Common myeloid progenitor, CD34-positive (primary cell): ENCODE measurements at regions of chr2 and their contacts with region 1.

Region 1: GRCh38 chr2:64675860-64676259 is 22.1 kb upstream of the SERTAD2 start:
- DNase-seq: peak in 2 of 3 donors; percentile 45 to 70
- H3K4me3 ChIP-seq: no peak overlapping the region
- H3K27ac ChIP-seq: no peak overlapping the region
- H3K4me1 ChIP-seq: peaks cover 4 to 33% (median 18%) of the 10 kb centered on the region in 4 experiments
- H3K27me3 ChIP-seq: no peaks in the 10 kb centered on the region

Region 2: DNA sequence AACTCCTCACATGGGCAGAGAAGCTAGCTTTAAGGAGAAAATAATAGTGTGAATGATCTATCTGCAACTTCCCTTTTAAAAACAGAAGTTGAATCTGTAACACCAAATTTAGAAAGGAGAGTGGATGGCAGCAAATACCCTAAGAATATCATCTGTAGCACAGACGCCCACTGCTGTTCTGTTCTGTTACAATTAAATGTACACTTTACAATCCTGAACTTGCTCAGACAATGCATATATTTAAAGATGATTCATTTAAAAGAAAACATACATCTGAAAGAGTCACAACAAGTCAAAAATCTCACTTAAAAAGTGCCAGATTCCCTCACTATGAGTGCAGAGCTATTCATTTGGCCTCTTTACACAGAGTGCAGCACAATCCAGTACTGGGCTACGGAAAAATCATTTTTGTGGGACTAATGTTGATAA is 14.1 kb before region 1 on chr2:
- CTCF ChIA-PET with region 1: interaction called, 36 read pairs
- POLR2A ChIA-PET with region 1: interaction called, 7 read pairs
- DNase-seq: peak in 2 of 3 donors; percentile 61 to 70
- H3K4me3 ChIP-seq: peak overlapping the region in 3 of 7 experiments; percentile 13 to 31 (median 21)
- H3K27ac ChIP-seq: no peak overlapping the region
- H3K4me1 ChIP-seq: peaks cover 44 to 83% (median 58%) of the 10 kb centered on the region in 4 experiments
- H3K27me3 ChIP-seq: no peaks in the 10 kb centered on the region